ENCODE measurements at regions of chr11 and their contacts with region 1.

Region 1: DNA sequence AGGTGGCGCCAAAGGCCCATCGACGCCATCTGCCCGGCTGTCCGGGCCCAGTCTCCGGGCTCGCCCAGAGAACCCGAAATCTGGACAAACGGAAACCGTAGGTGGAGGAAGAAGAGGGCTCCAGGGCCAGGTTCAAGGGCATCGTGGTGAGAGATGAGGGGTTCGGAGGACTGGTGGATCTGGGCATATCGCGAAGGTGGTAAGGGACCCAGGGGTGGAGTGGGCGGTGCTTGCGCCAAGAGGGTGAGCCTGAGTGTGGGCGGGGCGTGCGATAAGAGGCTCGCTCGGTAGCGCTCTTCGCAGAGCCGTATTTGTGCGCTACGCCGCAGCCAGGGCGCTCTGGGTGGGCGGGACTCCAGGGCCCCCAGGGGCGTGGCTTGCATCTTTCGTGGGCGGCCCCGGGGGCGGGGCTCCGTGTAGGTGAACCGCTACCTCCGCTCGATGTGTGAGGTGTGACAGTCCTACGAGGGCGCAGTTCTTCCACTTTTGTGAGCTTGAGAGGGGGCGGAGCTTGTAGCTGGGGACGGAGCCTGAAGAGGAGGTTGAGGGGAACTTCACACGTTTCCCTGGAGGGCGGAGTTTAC is 4.8 kb downstream of the CD248 start:
- DNase-seq: peak; percentile 95 to 97
- H3K4me3 ChIP-seq: peak overlapping the region; percentile 46 to 56 (median 56)
- H3K27ac ChIP-seq: peak overlapping the region; percentile 84 to 94 (median 90)
- H3K4me1 ChIP-seq: peaks cover 29 to 49% (median 44%) of the 10 kb centered on the region in 4 donors
- H3K27me3 ChIP-seq: peaks cover 0 to 9% (median 0%) of the 10 kb centered on the region in 3 donors
- CTCF ChIP-seq: peak in 4 of 7 experiments; percentile 74 to 96 (median 88)
- EP300 ChIP-seq: no peak
- POLR2A ChIP-seq: no peak

Region 2: DNA sequence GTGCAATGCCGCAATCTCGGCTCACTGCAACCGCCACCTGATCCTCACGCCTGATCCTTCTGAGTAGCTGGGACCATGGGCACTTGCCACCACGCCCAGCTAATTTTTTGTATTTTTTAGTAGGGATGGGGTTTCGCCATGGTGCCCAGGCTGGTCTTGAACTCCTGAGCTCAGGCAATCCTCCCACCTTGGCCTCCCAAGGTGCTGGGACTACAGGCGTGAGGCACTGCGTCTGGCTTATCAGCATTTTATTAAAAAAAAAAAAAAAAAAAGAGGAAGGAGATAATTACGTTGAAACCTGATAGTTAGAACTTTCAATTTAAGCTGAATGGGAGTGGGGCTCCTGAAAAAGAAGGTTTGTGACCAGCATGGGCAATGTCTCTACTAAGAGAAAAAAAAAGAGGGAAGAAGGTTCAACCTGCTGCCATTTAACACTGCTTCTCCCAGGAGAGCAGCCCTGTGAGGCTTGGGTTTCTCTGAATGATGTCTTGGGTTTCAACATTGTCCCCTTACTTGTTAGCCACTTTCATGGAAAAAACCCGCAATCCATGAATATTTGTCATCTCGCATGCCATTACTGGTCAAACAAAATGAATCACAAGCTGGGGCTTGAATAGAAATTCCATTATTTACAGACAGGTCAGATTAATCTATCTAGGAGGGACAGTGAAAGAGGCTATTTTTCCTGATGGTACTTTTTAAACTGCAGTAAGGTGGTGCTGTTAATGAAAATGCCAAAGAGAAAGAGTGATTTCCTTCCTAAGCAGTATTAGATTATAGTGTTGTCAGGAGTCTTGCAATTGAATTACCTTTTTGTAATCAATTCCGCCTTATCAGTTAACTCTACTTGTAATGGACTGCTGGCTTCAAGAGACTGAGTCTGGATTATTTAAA is 169.4 kb before region 1 on chr11:
- intact Hi-C with region 1: no loop called
- DNase-seq: no peak
- H3K4me3 ChIP-seq: no peak overlapping the region
- H3K27ac ChIP-seq: peak overlapping the region in 4 of 5 donors; percentile 28 to 76 (median 64)
- H3K4me1 ChIP-seq: peaks cover 15 to 56% (median 37%) of the 10 kb centered on the region in 4 donors
- H3K27me3 ChIP-seq: no peaks in the 10 kb centered on the region
- CTCF ChIP-seq: no peak
- EP300 ChIP-seq: no peak
- POLR2A ChIP-seq: no peak

Region 3: DNA sequence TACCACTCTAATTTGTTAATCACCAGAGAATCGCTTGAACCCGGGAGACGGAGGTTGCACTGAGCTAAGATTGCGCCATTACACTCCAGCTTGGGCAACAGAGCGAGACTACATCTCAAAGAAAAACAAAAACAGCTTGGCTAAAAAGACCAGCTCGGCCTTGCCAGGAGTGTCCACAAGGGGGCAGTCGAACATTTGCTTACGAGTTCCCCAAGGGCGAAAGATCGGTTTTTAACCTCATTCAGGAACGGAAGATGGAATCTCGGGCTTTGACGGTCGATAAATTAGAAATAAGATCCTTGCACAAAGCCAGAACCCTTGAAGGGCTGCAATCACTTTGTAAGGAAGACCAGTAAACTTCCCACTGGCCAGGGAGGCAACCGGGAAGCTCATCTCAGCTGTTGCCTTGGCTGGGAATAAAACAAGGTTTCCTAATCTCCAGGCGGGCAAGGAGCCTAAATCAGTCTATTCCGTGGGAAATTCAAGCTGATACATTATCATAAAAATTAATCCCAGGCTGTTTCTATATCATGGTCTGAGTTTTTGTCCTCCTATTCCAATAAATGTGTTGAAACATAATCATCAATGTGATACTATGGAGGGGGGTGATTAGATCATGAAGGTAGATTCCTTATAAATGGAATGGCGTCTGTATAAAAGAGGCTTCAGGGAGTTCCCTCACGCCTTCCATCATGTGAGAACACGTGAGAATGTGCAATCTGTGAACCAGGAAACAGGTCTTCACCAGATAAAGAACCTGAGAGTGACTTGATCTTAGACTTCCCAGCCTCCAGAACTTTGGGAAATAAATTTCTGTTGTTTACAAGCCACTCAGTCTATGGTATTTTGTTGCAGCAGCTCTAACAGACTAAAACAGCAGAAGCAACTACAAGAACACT is 74.4 kb after region 1 on chr11:
- intact Hi-C with region 1: loop called (anchors 10 kb)
- DNase-seq: peak; percentile 91 to 92
- H3K4me3 ChIP-seq: peak overlapping the region in 3 of 4 donors; percentile 22 to 32 (median 29)
- H3K27ac ChIP-seq: peak overlapping the region in 1 of 5 donors; percentile 21
- H3K4me1 ChIP-seq: peaks cover 0 to 11% (median 10%) of the 10 kb centered on the region in 4 donors
- H3K27me3 ChIP-seq: peaks cover 0 to 33% (median 0%) of the 10 kb centered on the region in 3 donors
- CTCF ChIP-seq: peak in 5 of 7 experiments; percentile 69 to 94 (median 91)
- EP300 ChIP-seq: no peak
- POLR2A ChIP-seq: no peak

Measured in stomach (tissue), 19 donors.